ENCODE measurements at regions of chrX and their contacts with region 1.

Region 1: DNA sequence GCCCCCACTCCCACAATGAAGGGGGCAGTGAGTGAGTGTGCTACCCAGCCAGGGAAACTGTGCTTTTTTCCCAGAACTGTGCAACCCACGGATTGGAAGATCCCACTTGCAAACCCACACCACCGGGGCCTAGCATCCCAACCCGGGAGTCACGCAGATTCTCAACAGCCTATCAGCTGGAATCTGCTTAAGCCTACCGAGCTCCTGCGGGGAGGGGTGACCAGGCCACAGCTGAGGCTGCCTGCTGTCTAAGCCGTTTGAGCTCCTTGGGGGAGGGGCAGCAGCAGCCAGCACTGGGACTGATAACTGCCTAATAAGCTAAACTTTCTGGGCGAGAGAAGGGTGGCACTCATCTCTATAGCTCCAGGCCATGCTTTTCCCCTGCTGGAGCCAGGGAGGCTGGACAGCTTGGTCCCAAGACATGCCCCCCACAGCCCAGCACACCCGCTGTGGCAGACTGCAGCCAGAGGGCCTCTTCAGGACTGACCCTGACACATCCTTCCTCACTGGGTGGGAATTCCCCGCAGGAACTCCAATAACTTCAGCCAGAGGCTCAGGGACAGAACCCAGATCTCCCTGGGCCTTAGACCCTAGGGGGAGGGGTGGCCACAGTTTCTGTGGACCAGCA is 161.3 kb upstream of the MAGEB18 start:
- DNase-seq: no peak
- H3K4me3 ChIP-seq: no peak overlapping the region
- H3K27ac ChIP-seq: no peak overlapping the region
- H3K4me1 ChIP-seq: no peaks in the 10 kb centered on the region
- H3K27me3 ChIP-seq: no peaks in the 10 kb centered on the region
- CTCF ChIP-seq: no peak
- EP300 ChIP-seq: no peak
- POLR2A ChIP-seq: no peak

Region 2: GRCh38 chrX:25878806-25879205 is 98.0 kb before region 1 on chrX:
- in situ Hi-C with region 1: loop called in 1 of 4 experiments (anchors 25 kb)
- intact Hi-C with region 1: no loop called
- DNase-seq: no peak
- H3K4me3 ChIP-seq: no peak overlapping the region
- H3K27ac ChIP-seq: no peak overlapping the region
- H3K4me1 ChIP-seq: no peaks in the 10 kb centered on the region
- H3K27me3 ChIP-seq: no peaks in the 10 kb centered on the region
- CTCF ChIP-seq: no peak
- EP300 ChIP-seq: no peak
- POLR2A ChIP-seq: no peak

Region 3: GRCh38 chrX:26100421-26100920 is 123.7 kb after region 1 on chrX:
- in situ Hi-C with region 1: no loop called
- intact Hi-C with region 1: no loop called
- DNase-seq: no peak
- H3K4me3 ChIP-seq: no peak overlapping the region
- H3K27ac ChIP-seq: no peak overlapping the region
- H3K4me1 ChIP-seq: no peaks in the 10 kb centered on the region
- H3K27me3 ChIP-seq: no peaks in the 10 kb centered on the region
- CTCF ChIP-seq: no peak
- EP300 ChIP-seq: no peak
- POLR2A ChIP-seq: no peak